PC-9 (cell line): ENCODE measurements at regions of chr1 and their contacts with region 1.

Region 1: DNA sequence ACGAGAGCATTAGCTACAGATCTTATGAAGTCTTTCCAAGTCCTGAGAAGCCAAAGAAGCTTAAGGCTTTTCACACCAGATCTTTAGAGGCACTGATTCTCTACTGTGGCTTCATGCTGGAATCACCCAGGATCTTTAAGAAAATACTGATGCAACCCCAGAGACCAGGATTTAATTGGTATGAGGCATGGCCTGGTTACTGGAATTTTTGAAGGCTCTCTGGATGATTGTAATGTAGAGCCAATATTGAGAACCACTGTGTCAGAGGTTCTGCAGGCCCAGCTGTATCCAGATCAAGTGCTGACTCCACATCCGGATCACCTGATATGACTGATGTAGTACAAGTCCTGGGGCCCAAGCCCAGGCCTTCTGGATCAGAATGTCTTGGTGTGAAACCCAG is 105.7 kb downstream of the PLPPR5 start:
- DNase-seq: no peak
- H3K4me3 ChIP-seq: no peak overlapping the region
- H3K27ac ChIP-seq: no peak overlapping the region
- H3K4me1 ChIP-seq: no peaks in the 10 kb centered on the region
- H3K27me3 ChIP-seq: no peaks in the 10 kb centered on the region
- CTCF ChIP-seq: no peak

Region 2: GRCh38 chr1:99771513-99771918 is 872.6 kb after region 1 on chr1:
- CTCF ChIA-PET with region 1: interaction called, 14 read pairs
- POLR2A ChIA-PET with region 1: no interaction called
- intact Hi-C with region 1: no loop called
- DNase-seq: no peak
- H3K4me3 ChIP-seq: no peak overlapping the region
- H3K27ac ChIP-seq: no peak overlapping the region
- H3K4me1 ChIP-seq: peaks cover 7% of the 10 kb centered on the region
- H3K27me3 ChIP-seq: no peaks in the 10 kb centered on the region
- CTCF ChIP-seq: no peak

Region 3: GRCh38 chr1:99950486-99950885 is 1051.5 kb after region 1 on chr1:
- CTCF ChIA-PET with region 1: no interaction called
- POLR2A ChIA-PET with region 1: no interaction called
- intact Hi-C with region 1: no loop called
- DNase-seq: peak in 1 of 2 experiments; percentile 30
- H3K4me3 ChIP-seq: no peak overlapping the region
- H3K27ac ChIP-seq: no peak overlapping the region
- H3K4me1 ChIP-seq: no peaks in the 10 kb centered on the region
- H3K27me3 ChIP-seq: no peaks in the 10 kb centered on the region
- CTCF ChIP-seq: no peak

Region 4: DNA sequence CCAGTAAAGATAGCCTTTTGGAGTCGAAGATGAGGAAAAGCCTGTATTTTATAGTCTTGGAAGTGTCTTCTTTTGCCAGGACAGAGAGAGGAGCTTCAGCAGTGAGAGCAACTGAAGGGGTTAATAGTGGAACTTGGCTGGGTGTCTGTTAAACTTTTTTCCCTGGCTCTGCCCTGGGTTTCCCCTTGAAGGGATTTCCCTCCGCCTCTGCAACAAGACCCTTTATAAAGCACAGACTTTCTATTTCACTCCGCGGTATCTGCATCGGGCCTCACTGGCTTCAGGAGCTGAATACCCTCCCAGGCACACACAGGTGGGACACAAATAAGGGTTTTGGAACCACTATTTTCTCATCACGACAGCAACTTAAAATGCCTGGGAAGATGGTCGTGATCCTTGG is 1820.5 kb after region 1 on chr1 and contains the start of gene VCAM1:
- CTCF ChIA-PET with region 1: no interaction called
- POLR2A ChIA-PET with region 1: no interaction called
- intact Hi-C with region 1: no loop called
- DNase-seq: no peak
- H3K4me3 ChIP-seq: no peak within 1 kb of the TSS
- H3K27ac ChIP-seq: no peak within 1 kb of the TSS
- H3K4me1 ChIP-seq: peaks cover 15% of the 10 kb centered on the region
- H3K27me3 ChIP-seq: no peaks in the 10 kb centered on the region
- CTCF ChIP-seq: no peak
- total RNA-seq, gene VCAM1: not detected in 2 replicates